Activated B cell treated with CpG ODN at 0.5 μM for 24 hours (primary cell): ENCODE measurements at regions of chr7 and their contacts with region 1.

Region 1: GRCh38 chr7:26200444-26201246 is at the start of gene HNRNPA2B1:
- DNase-seq: peak; percentile 95
- ATAC-seq: peak; percentile 66
- H3K4me3 Mint-ChIP-seq: peak within 1 kb of the TSS; percentile 99
- H3K27ac Mint-ChIP-seq: peak within 1 kb of the TSS; percentile 100
- H3K4me1 Mint-ChIP-seq: peaks cover 55% of the 10 kb centered on the region
- H3K27me3 Mint-ChIP-seq: no peaks in the 10 kb centered on the region
- CTCF ChIP-seq: no peak
- total RNA-seq, gene HNRNPA2B1: 618 and 634 TPM in 2 replicates

Region 2: GRCh38 chr7:25951031-25951948 is 249.4 kb before region 1 on chr7:
- CTCF ChIA-PET with region 1: no interaction called
- POLR2A ChIA-PET with region 1: no interaction called
- intact Hi-C with region 1: loop called (anchors 2 kb)
- DNase-seq: peak; percentile 82
- ATAC-seq: peak; percentile 93
- H3K4me3 Mint-ChIP-seq: peak overlapping the region; percentile 92
- H3K27ac Mint-ChIP-seq: peak overlapping the region; percentile 81
- H3K4me1 Mint-ChIP-seq: peaks cover 35% of the 10 kb centered on the region
- H3K27me3 Mint-ChIP-seq: peaks cover 31% of the 10 kb centered on the region
- CTCF ChIP-seq: no peak

Region 3: GRCh38 chr7:26090927-26091519 is 109.6 kb before region 1 on chr7:
- CTCF ChIA-PET with region 1: interaction called, 123 read pairs
- POLR2A ChIA-PET with region 1: interaction called, 110 read pairs
- intact Hi-C with region 1: loop called (anchors 1 kb)
- DNase-seq: no peak
- ATAC-seq: peak; percentile 45
- H3K4me3 Mint-ChIP-seq: peak overlapping the region; percentile 7
- H3K27ac Mint-ChIP-seq: no peak overlapping the region
- H3K4me1 Mint-ChIP-seq: peaks cover 27% of the 10 kb centered on the region
- H3K27me3 Mint-ChIP-seq: no peaks in the 10 kb centered on the region
- CTCF ChIP-seq: peak; percentile 42

Region 4: GRCh38 chr7:26187380-26188205 is 13.1 kb before region 1 on chr7:
- CTCF ChIA-PET with region 1: interaction called, 34 read pairs
- POLR2A ChIA-PET with region 1: interaction called, 42 read pairs
- intact Hi-C with region 1: loop called (anchors 1 kb)
- DNase-seq: no peak
- ATAC-seq: no peak
- H3K4me3 Mint-ChIP-seq: no peak overlapping the region
- H3K27ac Mint-ChIP-seq: peak overlapping the region; percentile 50
- H3K4me1 Mint-ChIP-seq: peaks cover 75% of the 10 kb centered on the region
- H3K27me3 Mint-ChIP-seq: no peaks in the 10 kb centered on the region
- CTCF ChIP-seq: no peak

Region 5: GRCh38 chr7:26337232-26337865 is 136.7 kb after region 1 on chr7:
- CTCF ChIA-PET with region 1: interaction called, 3 read pairs
- POLR2A ChIA-PET with region 1: interaction called, 20 read pairs
- intact Hi-C with region 1: loop called (anchors 1 kb)
- DNase-seq: no peak
- ATAC-seq: peak; percentile 68
- H3K4me3 Mint-ChIP-seq: peak overlapping the region; percentile 60
- H3K27ac Mint-ChIP-seq: peak overlapping the region; percentile 96
- H3K4me1 Mint-ChIP-seq: peaks cover 83% of the 10 kb centered on the region
- H3K27me3 Mint-ChIP-seq: no peaks in the 10 kb centered on the region
- CTCF ChIP-seq: no peak

Region 6: DNA sequence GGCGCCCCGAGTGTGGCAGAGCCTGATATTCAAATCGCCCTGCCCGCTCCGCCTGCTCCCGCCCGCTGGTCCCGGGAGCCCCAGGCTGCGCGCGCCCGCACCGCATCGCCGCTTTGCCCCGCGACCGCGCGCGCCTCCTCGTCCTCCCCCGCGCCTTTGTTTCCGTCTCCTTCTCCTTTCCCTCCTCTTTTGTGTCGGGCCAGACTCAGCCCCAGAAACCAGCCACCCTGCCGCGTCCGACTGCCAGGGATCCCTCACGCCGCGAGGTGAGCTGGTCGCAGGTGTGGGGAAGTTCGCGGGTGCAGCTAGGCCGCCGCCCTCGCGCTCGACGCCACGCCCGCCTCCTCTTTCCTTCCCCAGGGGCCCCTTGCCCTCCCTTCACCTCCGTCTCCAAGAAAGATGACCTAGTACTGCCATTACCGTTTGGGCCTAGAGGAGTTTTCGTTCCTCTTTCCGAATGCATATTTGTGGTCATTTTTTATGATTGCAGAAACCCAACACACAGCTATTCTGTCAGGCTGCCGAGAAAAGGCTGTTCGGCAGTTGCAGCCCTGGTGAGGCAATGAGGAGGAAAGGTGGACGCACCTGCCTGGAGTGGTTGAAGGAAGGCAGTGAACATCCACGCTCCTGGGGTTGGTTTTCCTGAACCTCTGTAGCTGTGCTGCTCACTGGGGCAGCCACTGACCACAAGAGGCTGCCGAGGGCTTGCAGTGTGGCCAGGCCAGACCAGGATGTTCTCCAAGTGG is 198.3 kb after region 1 on chr7:
- CTCF ChIA-PET with region 1: interaction called, 3 read pairs
- POLR2A ChIA-PET with region 1: interaction called, 11 read pairs
- intact Hi-C with region 1: loop called (anchors 1 kb)
- DNase-seq: peak; percentile 83
- ATAC-seq: peak; percentile 89
- H3K4me3 Mint-ChIP-seq: peak overlapping the region; percentile 98
- H3K27ac Mint-ChIP-seq: peak overlapping the region; percentile 98
- H3K4me1 Mint-ChIP-seq: peaks cover 36% of the 10 kb centered on the region
- H3K27me3 Mint-ChIP-seq: no peaks in the 10 kb centered on the region
- CTCF ChIP-seq: no peak

Region 7: GRCh38 chr7:26417911-26418413 is 217.3 kb after region 1 on chr7:
- CTCF ChIA-PET with region 1: no interaction called
- POLR2A ChIA-PET with region 1: no interaction called
- intact Hi-C with region 1: no loop called
- DNase-seq: no peak
- ATAC-seq: no peak
- H3K4me3 Mint-ChIP-seq: no peak overlapping the region
- H3K27ac Mint-ChIP-seq: no peak overlapping the region
- H3K4me1 Mint-ChIP-seq: no peaks in the 10 kb centered on the region
- H3K27me3 Mint-ChIP-seq: peaks cover 5% of the 10 kb centered on the region
- CTCF ChIP-seq: no peak

Region 8: DNA sequence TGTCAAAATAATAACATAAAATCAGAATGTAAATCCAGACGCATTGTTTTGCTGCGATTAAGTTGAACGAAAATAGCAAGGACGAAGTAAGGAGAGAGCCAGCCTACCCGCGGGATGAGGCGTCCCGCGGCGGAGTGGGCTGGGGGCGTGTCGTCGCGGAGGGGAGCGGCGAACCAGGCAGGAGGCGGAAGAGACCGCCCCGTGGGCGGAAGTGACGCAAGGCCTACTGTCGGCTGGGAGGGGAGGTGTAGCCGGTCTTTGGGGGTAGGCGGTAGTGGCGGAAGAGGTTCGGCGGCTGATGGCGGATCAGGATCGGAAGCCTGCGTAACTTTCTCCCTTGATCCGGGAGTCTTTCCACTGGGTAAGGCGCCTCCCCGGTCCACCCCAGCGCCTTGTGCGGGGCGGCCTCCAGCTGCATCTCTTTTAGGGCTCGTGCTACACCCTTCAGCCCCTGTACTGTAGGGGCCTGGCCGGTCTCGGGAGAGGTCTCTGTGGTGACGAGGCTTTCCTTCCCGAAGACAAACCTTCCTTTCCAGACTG is 1539.3 kb after region 1 on chr7 and contains the start of gene TAX1BP1:
- CTCF ChIA-PET with region 1: no interaction called
- POLR2A ChIA-PET with region 1: no interaction called
- intact Hi-C with region 1: loop called (anchors 1 kb)
- DNase-seq: peak; percentile 92
- ATAC-seq: peak; percentile 93
- H3K4me3 Mint-ChIP-seq: peak within 1 kb of the TSS; percentile 95
- H3K27ac Mint-ChIP-seq: peak within 1 kb of the TSS; percentile 96
- H3K4me1 Mint-ChIP-seq: peaks cover 36% of the 10 kb centered on the region
- H3K27me3 Mint-ChIP-seq: no peaks in the 10 kb centered on the region
- CTCF ChIP-seq: no peak
- total RNA-seq, gene TAX1BP1: 61.4 and 64.7 TPM in 2 replicates